ENCODE measurements at regions of chr1 and their contacts with region 1.

Region 1: DNA sequence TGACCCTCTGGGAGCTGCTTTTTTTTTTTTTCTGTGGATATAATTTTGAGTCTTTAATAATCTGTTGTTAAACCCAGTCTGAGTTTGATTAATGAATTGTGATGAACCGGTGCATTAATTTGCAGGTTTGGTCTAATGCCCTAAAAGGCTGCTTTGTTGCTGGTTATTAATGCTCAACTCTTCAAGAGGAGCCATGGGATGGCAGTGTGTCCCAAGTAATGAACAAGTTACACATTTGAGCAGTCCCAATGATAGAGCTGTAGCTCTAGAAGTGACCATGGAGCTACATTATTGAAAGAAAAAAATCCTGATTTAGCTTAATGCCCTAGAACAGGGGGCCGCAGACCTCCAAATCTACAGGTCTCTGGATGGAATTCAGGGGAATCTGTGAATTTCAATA is 53.1 kb downstream of the RWDD3 start:
- DNase-seq: no peak
- ATAC-seq: peak; percentile 68
- H3K4me3 ChIP-seq: no peak overlapping the region
- H3K27ac ChIP-seq: no peak overlapping the region
- H3K4me1 ChIP-seq: no peaks in the 10 kb centered on the region
- H3K27me3 ChIP-seq: no peaks in the 10 kb centered on the region
- CTCF ChIP-seq: peak; percentile 26; the same call in 1 of the 2 replicates

Region 2: GRCh38 chr1:94962409-94963265 is 324.4 kb before region 1 on chr1:
- CTCF ChIA-PET with region 1: no interaction called
- POLR2A ChIA-PET with region 1: no interaction called
- in situ Hi-C with region 1: no loop called
- intact Hi-C with region 1: no loop called
- DNase-seq: no peak
- ATAC-seq: no peak
- H3K4me3 ChIP-seq: peak overlapping the region in 1 of 2 experiments; percentile 34; a peak in 3 of 4 replicates
- H3K27ac ChIP-seq: peak overlapping the region; percentile 37; the same call in 1 of the 2 replicates
- H3K4me1 ChIP-seq: 0 out of 2 replicates have a peak, but pooled peaks cover 2% of the 10 kb centered on the region
- H3K27me3 ChIP-seq: no peaks in the 10 kb centered on the region
- CTCF ChIP-seq: no peak

Region 3: GRCh38 chr1:95138223-95138622 is 148.9 kb before region 1 on chr1:
- CTCF ChIA-PET with region 1: no interaction called
- POLR2A ChIA-PET with region 1: no interaction called
- in situ Hi-C with region 1: no loop called
- intact Hi-C with region 1: no loop called
- DNase-seq: no peak
- ATAC-seq: no peak
- H3K4me3 ChIP-seq: no peak overlapping the region
- H3K27ac ChIP-seq: no peak overlapping the region
- H3K4me1 ChIP-seq: no peaks in the 10 kb centered on the region
- H3K27me3 ChIP-seq: no peaks in the 10 kb centered on the region
- CTCF ChIP-seq: no peak

Region 4: DNA sequence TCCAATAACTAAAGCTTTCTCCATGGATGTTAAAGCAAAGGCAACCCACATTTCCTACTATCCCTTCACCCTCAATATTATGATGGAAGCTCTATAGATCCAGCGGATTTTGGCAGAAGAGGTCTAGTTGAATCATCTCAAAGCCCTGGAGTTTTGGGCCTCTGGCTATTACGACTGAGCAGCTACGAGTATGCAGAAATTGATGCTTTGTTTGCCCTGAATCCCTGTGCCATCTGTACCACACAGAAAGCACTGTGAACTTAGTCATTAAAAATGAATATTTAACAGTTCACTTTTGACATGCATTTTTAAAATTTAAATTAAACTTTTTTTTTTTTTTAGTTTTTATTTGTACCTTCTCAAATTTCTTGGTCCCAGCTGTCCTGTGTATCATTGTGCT is 729.1 kb after region 1 on chr1:
- CTCF ChIA-PET with region 1: interaction called, 10 read pairs
- POLR2A ChIA-PET with region 1: no interaction called
- in situ Hi-C with region 1: no loop called
- intact Hi-C with region 1: no loop called
- DNase-seq: no peak
- ATAC-seq: no peak
- H3K4me3 ChIP-seq: no peak overlapping the region
- H3K27ac ChIP-seq: no peak overlapping the region
- H3K4me1 ChIP-seq: no peaks in the 10 kb centered on the region
- H3K27me3 ChIP-seq: no peaks in the 10 kb centered on the region
- CTCF ChIP-seq: no peak